CD4-positive, alpha-beta T cell (primary cell): ENCODE measurements at regions of chr17 and their contacts with region 1.

Region 1: GRCh38 chr17:8572764-8573163 is 57.8 kb downstream of the MYH10 start:
- DNase-seq: peak in 2 of 14 experiments; percentile 6 to 10
- ATAC-seq: no peak
- H3K4me3 ChIP-seq: no peak overlapping the region
- H3K4me3 Mint-ChIP-seq: no peak overlapping the region
- H3K27ac ChIP-seq: no peak overlapping the region
- H3K27ac Mint-ChIP-seq: no peak overlapping the region
- H3K4me1 ChIP-seq: no peaks in the 10 kb centered on the region
- H3K4me1 Mint-ChIP-seq: no peaks in the 10 kb centered on the region
- H3K27me3 ChIP-seq: no peaks in the 10 kb centered on the region
- H3K27me3 Mint-ChIP-seq: no peaks in the 10 kb centered on the region
- CTCF ChIP-seq: peak; percentile 39

Region 2: GRCh38 chr17:8599351-8600011 is 26.7 kb after region 1 on chr17:
- CTCF ChIA-PET with region 1: no interaction called
- POLR2A ChIA-PET with region 1: no interaction called
- intact Hi-C with region 1: no loop called
- DNase-seq: no peak
- ATAC-seq: no peak
- H3K4me3 ChIP-seq: no peak overlapping the region
- H3K4me3 Mint-ChIP-seq: no peak overlapping the region
- H3K27ac ChIP-seq: no peak overlapping the region
- H3K27ac Mint-ChIP-seq: no peak overlapping the region
- H3K4me1 ChIP-seq: no peaks in the 10 kb centered on the region
- H3K4me1 Mint-ChIP-seq: no peaks in the 10 kb centered on the region
- H3K27me3 ChIP-seq: no peaks in the 10 kb centered on the region
- H3K27me3 Mint-ChIP-seq: no peaks in the 10 kb centered on the region
- CTCF ChIP-seq: no peak

Region 3: DNA sequence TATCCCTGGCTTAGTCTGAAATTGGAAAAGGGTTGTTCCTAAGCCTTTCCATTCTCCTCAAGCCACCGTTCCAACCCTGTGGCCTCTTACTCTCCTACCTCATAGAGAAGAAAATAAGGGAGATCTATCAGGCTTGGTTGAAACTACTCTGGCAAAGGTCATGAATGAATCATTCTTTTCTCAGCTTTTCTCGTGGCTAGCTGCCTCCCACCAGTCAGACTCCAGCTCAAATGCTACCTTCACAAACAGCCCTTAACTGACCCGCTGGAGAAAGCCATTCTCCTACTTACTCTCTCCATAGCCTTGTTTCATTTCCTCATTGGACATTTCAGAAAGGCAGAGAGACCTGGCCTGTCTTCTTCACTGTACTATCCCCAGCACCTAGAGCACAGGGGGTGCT is 48.8 kb after region 1 on chr17:
- CTCF ChIA-PET with region 1: no interaction called
- POLR2A ChIA-PET with region 1: no interaction called
- intact Hi-C with region 1: no loop called
- DNase-seq: no peak
- ATAC-seq: no peak
- H3K4me3 ChIP-seq: no peak overlapping the region
- H3K4me3 Mint-ChIP-seq: no peak overlapping the region
- H3K27ac ChIP-seq: no peak overlapping the region
- H3K27ac Mint-ChIP-seq: no peak overlapping the region
- H3K4me1 ChIP-seq: no peaks in the 10 kb centered on the region
- H3K4me1 Mint-ChIP-seq: no peaks in the 10 kb centered on the region
- H3K27me3 ChIP-seq: peaks cover 7 to 9% of the 10 kb centered on the region in 2 experiments
- H3K27me3 Mint-ChIP-seq: peaks cover 41% of the 10 kb centered on the region
- CTCF ChIP-seq: no peak

Region 4: GRCh38 chr17:8745586-8746500 is 173.1 kb after region 1 on chr17:
- CTCF ChIA-PET with region 1: no interaction called
- POLR2A ChIA-PET with region 1: no interaction called
- intact Hi-C with region 1: loop called (anchors 2 to 5 kb)
- DNase-seq: peak; percentile 64 to 88 (median 76)
- ATAC-seq: peak; percentile 80
- H3K4me3 ChIP-seq: peak overlapping the region; percentile 78
- H3K4me3 Mint-ChIP-seq: peak overlapping the region; percentile 93
- H3K27ac ChIP-seq: peak overlapping the region; percentile 44 to 51
- H3K27ac Mint-ChIP-seq: peak overlapping the region; percentile 83
- H3K4me1 ChIP-seq: peaks cover 23% of the 10 kb centered on the region
- H3K4me1 Mint-ChIP-seq: peaks cover 12% of the 10 kb centered on the region
- H3K27me3 ChIP-seq: no peaks in the 10 kb centered on the region
- H3K27me3 Mint-ChIP-seq: no peaks in the 10 kb centered on the region
- CTCF ChIP-seq: peak; percentile 99